Sigmoid colon (tissue), 7 donors: ENCODE measurements at regions of chr17 and their contacts with region 1.

Region 1: DNA sequence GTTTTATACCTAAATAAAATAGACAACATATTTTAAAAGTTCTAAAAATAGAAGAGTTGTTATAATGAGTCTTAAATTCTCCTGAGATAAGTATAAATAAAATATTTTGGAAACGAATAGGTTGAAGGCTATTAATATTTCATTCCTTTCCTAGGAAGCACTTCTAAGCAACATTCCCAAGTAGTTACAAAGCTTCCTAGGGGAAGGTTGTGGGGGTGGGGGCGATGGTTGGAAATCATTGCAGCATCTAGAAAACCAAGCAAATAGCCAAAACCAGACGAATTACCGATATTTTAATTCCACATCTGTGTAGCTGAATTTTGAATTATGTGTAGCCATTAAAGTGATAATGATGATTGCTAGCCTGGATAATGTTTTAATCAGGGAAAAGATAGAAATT is 26.9 kb downstream of the PTRH2 start:
- DNase-seq: no peak
- H3K4me3 ChIP-seq: no peak overlapping the region
- H3K27ac ChIP-seq: no peak overlapping the region
- H3K4me1 ChIP-seq: peaks cover 0 to 13% (median 3%) of the 10 kb centered on the region in 4 donors
- H3K27me3 ChIP-seq: no peaks in the 10 kb centered on the region
- CTCF ChIP-seq: no peak
- EP300 ChIP-seq: no peak
- POLR2A ChIP-seq: no peak

Region 2: GRCh38 chr17:60065136-60065535 is 384.8 kb after region 1 on chr17:
- intact Hi-C with region 1: loop called (anchors 10 kb)
- DNase-seq: no peak
- H3K4me3 ChIP-seq: no peak overlapping the region
- H3K27ac ChIP-seq: no peak overlapping the region
- H3K4me1 ChIP-seq: no peaks in the 10 kb centered on the region
- H3K27me3 ChIP-seq: no peaks in the 10 kb centered on the region
- CTCF ChIP-seq: no peak
- EP300 ChIP-seq: no peak
- POLR2A ChIP-seq: no peak

Region 3: DNA sequence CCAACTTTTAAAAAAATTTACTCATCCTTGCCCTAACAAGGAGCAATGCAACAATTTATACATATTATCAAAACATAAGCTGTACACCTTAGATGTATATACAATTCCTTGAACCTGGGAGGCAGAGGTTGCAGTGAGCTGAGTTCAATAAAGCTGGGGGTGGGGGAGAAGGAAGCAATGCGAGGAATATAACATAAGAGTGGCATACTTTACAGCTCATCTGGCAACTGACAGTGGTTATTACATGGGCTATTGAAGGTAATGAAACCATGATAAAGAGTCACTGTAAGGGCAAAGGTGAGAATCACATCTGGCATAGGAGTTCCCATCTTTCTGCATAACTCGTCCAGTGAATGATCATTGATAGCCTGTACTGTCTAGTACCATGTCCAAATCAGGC is 513.2 kb after region 1 on chr17:
- intact Hi-C with region 1: loop called (anchors 10 kb)
- DNase-seq: no peak
- H3K4me3 ChIP-seq: no peak overlapping the region
- H3K27ac ChIP-seq: no peak overlapping the region
- H3K4me1 ChIP-seq: no peaks in the 10 kb centered on the region
- H3K27me3 ChIP-seq: no peaks in the 10 kb centered on the region
- CTCF ChIP-seq: no peak
- EP300 ChIP-seq: no peak
- POLR2A ChIP-seq: no peak